Lower leg skin (tissue), 4 donors: ENCODE measurements at regions of chrX and their contacts with region 1.

Region 1: DNA sequence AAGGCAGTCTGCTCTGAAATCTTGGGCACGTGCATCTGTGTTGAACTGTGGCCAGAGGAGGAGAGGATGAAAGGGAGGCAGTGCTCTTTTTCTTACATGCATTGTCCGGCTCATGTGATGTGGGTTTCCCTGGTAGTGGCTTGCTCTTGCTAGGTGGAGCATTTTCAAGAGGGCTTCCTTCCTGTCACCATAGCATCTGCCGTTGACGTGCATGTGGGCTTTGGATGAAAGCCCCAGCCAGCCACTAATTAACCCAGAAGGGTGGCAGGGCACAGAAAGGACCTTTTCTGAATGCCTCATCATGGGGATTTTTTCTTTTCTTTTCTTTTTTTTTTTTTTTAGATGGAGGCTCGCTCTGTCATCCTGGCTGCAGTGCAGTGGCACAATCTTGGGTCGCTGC is 121.3 kb downstream of the GPR143 start:
- DNase-seq: no peak
- H3K4me3 ChIP-seq: no peak overlapping the region
- CTCF ChIP-seq: no peak
- POLR2A ChIP-seq: no peak

Region 2: GRCh38 chrX:9573282-9574106 is 70.8 kb before region 1 on chrX:
- intact Hi-C with region 1: no loop called
- DNase-seq: peak in 1 of 2 donors; percentile 40
- H3K4me3 ChIP-seq: no peak overlapping the region
- CTCF ChIP-seq: no peak
- POLR2A ChIP-seq: no peak

Region 3: GRCh38 chrX:9729171-9729885 is 85.0 kb after region 1 on chrX:
- intact Hi-C with region 1: no loop called
- DNase-seq: no peak
- H3K4me3 ChIP-seq: no peak overlapping the region
- CTCF ChIP-seq: no peak
- POLR2A ChIP-seq: no peak

Region 4: GRCh38 chrX:10444205-10444604 is 799.9 kb after region 1 on chrX:
- intact Hi-C with region 1: loop called (anchors 5 kb)
- DNase-seq: no peak
- H3K4me3 ChIP-seq: no peak overlapping the region
- CTCF ChIP-seq: no peak
- POLR2A ChIP-seq: no peak